PC-9 (cell line): ENCODE measurements at regions of chr12 and their contacts with region 1.

Region 1: DNA sequence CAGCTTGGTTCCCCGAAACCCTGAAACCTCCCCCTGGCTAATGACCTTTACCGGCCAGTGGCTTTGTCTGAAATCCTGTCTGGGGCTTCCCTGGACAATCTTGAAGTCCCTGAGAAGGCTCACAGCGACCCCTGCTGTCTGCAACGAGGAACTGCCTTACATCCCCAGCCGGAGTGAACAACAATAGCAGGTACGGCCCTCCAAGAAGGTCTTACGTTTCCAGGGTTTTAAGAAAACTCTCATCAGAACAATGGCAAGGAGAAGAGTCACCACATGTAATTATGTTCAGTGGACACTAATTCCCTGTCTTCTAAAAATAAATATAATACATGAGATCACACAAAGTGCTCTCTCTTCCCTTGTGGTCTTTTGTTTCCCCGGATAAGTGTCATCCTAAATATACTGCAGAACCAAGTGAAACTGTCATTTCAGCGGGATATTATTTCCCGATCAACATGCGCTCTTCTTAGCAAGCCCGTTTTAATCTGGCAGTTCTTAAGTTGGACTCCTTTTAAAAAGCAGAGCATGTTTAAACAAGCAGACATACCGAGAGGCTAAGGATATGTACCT is 53.3 kb downstream of the RBM19 start:
- DNase-seq: peak; percentile 44 to 70
- H3K4me3 ChIP-seq: no peak overlapping the region
- H3K27ac ChIP-seq: no peak overlapping the region
- H3K4me1 ChIP-seq: no peaks in the 10 kb centered on the region
- H3K27me3 ChIP-seq: no peaks in the 10 kb centered on the region
- CTCF ChIP-seq: peak; percentile 94

Region 2: GRCh38 chr12:113048716-113049127 is 864.1 kb before region 1 on chr12:
- CTCF ChIA-PET with region 1: no interaction called
- POLR2A ChIA-PET with region 1: no interaction called
- intact Hi-C with region 1: loop called (anchors 5 kb)
- DNase-seq: peak; percentile 42 to 48
- H3K4me3 ChIP-seq: no peak overlapping the region
- H3K27ac ChIP-seq: no peak overlapping the region
- H3K4me1 ChIP-seq: no peaks in the 10 kb centered on the region
- H3K27me3 ChIP-seq: peaks cover 22% of the 10 kb centered on the region
- CTCF ChIP-seq: peak; percentile 86

Region 3: DNA sequence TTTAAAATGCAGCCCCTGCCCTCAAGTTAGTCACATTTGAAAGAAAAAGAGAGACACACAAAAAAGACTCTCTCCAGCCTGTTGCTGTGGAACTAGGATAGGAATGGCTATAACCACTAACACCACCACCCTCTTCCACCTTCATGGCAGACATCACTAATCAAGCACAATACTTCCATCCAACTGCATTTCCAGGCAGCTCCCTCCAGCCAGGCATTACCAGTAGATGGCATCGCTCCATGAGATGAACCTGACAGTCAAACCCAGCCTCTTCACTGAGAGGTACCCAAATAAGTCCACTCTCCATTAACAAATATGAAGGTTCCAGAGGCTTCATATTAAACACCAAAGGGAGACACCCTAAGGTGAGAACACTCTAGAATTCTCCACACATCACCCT is 602.4 kb before region 1 on chr12:
- CTCF ChIA-PET with region 1: no interaction called
- POLR2A ChIA-PET with region 1: no interaction called
- intact Hi-C with region 1: loop called (anchors 1 kb)
- DNase-seq: no peak
- H3K4me3 ChIP-seq: no peak overlapping the region
- H3K27ac ChIP-seq: no peak overlapping the region
- H3K4me1 ChIP-seq: no peaks in the 10 kb centered on the region
- H3K27me3 ChIP-seq: no peaks in the 10 kb centered on the region
- CTCF ChIP-seq: peak; percentile 40; the same call in 1 of the 2 replicates

Region 4: DNA sequence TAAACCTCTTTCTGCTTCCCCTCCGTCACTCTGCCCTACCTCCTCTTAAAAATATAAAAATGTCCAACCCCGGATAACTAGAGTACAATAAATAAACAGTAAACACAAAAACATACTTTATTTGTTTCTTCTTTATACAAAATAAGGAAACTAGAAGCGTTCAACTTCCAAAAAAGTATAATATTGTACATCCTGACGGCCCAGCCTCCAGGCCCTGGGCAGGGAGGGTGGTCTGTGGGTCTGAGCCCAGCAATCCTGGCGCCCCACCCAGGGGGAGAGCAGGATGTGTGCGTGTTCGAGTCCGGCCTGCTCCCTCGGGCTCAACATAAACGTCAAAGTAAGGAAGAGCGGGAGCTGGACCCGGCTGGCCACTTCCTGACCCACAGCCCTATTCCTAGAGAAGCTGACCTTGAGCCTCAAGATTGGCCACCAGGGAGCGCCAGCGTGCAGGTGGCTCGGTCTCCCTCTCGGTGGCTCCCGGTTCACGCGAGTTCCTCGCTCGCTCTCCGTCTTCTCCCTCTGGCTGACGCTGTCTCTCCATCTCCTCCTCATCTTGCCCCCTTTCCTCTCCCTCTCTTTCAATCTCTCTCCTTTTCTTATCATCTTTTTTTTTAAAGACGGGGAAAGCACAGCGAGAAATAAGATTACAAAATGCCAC is 450.6 kb before region 1 on chr12:
- CTCF ChIA-PET with region 1: no interaction called
- POLR2A ChIA-PET with region 1: no interaction called
- intact Hi-C with region 1: loop called (anchors 1 kb)
- DNase-seq: peak in 1 of 2 experiments; percentile 66
- H3K4me3 ChIP-seq: no peak overlapping the region
- H3K27ac ChIP-seq: no peak overlapping the region
- H3K4me1 ChIP-seq: no peaks in the 10 kb centered on the region
- H3K27me3 ChIP-seq: peaks cover 23% of the 10 kb centered on the region
- CTCF ChIP-seq: peak; percentile 80

Region 5: GRCh38 chr12:113762155-113762881 is 150.5 kb before region 1 on chr12:
- CTCF ChIA-PET with region 1: no interaction called
- POLR2A ChIA-PET with region 1: no interaction called
- intact Hi-C with region 1: loop called (anchors 5 kb)
- DNase-seq: no peak
- H3K4me3 ChIP-seq: no peak overlapping the region
- H3K27ac ChIP-seq: no peak overlapping the region
- H3K4me1 ChIP-seq: peaks cover 8% of the 10 kb centered on the region
- H3K27me3 ChIP-seq: no peaks in the 10 kb centered on the region
- CTCF ChIP-seq: no peak

Region 6: DNA sequence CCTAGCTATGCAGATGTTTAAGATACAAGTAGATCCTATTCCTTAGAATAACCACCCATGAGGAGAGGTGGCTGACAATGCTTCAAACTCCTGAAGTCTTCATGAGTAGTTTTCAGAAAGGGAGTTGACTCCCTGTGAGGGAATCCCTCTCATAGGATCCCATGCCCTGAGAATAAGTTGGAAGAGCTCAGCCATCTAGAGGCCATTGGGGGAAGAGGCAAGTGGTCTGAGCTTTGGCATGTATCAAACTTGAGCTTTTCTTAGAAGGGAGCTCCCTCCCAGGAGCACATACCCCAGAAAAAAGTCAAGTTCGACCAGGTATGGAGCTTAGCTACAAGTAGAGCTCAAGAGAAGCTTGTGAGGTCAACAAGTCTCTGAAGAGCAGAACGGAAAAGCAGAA is 219.0 kb after region 1 on chr12:
- CTCF ChIA-PET with region 1: no interaction called
- POLR2A ChIA-PET with region 1: no interaction called
- intact Hi-C with region 1: no loop called
- DNase-seq: no peak
- H3K4me3 ChIP-seq: no peak overlapping the region
- H3K27ac ChIP-seq: no peak overlapping the region
- H3K4me1 ChIP-seq: no peaks in the 10 kb centered on the region
- H3K27me3 ChIP-seq: peaks cover 13% of the 10 kb centered on the region
- CTCF ChIP-seq: no peak